ENCODE measurements at regions of chr10 and their contacts with region 1.

Region 1: GRCh38 chr10:4470231-4470835 is 355.7 kb upstream of the AKR1E2 start:
- DNase-seq: peak; percentile 92
- ATAC-seq: peak; percentile 86
- H3K4me3 ChIP-seq: no peak overlapping the region
- H3K27ac ChIP-seq: no peak overlapping the region
- H3K4me1 ChIP-seq: peaks cover 7% of the 10 kb centered on the region
- H3K27me3 ChIP-seq: no peaks in the 10 kb centered on the region
- CTCF ChIP-seq: no peak
- POLR2A ChIP-seq: no peak
- RAD21 ChIP-seq: 0 out of 2 replicates have a peak, but pooled peaks have one; percentile 10

Region 2: DNA sequence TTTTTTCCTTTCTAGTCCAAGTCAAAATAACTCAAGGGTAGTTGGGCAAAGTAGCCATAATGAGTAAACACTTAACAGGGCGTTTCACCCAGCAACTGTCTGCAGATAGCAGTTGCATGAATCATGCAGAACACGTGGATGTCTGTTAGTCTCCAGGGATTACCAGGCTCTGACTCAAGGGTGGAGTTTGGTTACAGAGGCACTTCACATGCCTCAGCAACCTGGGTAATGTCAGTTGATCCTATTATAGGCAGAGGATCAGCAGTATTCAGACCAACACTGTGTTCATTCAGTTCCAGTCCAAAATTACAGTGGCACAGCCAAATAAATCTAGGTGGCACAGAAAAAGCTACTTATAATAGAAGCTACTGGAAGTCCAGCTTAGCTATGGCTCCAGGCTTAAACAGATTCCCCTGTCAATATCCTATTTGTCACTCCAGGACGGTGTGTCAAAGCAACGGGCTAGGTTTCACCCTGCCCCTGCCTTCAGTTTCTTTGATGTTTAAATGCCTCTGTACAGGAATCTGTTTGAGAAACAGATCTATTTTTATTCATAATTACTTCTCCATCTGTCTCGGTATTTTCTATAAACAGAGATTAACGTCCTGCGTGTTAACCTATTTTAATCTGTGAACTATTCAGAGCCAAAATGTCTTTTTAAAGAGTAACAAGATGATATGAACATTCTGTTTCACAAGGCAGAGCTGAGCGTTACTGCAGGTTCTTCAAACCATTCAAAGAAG is 193.0 kb after region 1 on chr10:
- CTCF ChIA-PET with region 1: no interaction called
- POLR2A ChIA-PET with region 1: interaction called, 11 read pairs
- dilution Hi-C with region 1: no loop called
- in situ Hi-C with region 1: no loop called
- intact Hi-C with region 1: no loop called
- DNase-seq: peak; percentile 99
- ATAC-seq: peak; percentile 94
- H3K4me3 ChIP-seq: peak overlapping the region; percentile 8; the same call in 1 of the 2 replicates
- H3K27ac ChIP-seq: peak overlapping the region; percentile 92
- H3K4me1 ChIP-seq: peaks cover 15% of the 10 kb centered on the region
- H3K27me3 ChIP-seq: no peaks in the 10 kb centered on the region
- CTCF ChIP-seq: no peak
- POLR2A ChIP-seq: peak; percentile 86
- RAD21 ChIP-seq: peak; percentile 6; the same call in 1 of the 2 replicates